ENCODE measurements at regions of chr7 and their contacts with region 1.

Region 1: DNA sequence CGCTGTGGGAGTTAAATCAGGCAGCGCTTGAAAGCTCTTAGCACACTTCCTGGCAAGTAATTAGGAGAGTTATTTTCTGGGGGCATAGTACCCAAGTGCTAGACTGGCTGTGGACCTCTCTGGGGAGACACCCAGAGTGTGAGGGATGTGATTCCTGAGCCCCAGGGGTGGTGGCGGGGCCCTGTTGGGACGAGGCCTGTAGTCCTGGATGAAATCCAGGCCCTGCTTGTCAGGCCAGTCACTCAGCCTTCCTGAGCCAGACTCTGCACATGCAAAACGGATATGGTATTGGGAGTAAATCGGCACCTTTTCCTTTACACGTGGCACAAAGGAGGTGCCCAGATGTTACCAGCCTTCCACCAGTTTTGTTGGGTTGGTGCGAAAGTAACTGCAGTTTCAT is 31.2 kb downstream of the TRRAP start:
- DNase-seq: no peak
- ATAC-seq: no peak
- H3K4me3 ChIP-seq: no peak overlapping the region
- H3K4me3 Mint-ChIP-seq: no peak overlapping the region
- H3K27ac ChIP-seq: no peak overlapping the region
- H3K27ac Mint-ChIP-seq: no peak overlapping the region
- H3K4me1 ChIP-seq: no peaks in the 10 kb centered on the region
- H3K4me1 Mint-ChIP-seq: no peaks in the 10 kb centered on the region
- H3K27me3 ChIP-seq: no peaks in the 10 kb centered on the region
- H3K27me3 Mint-ChIP-seq: no peaks in the 10 kb centered on the region
- CTCF ChIP-seq: no peak

Region 2: GRCh38 chr7:98892609-98893008 is 16.9 kb before region 1 on chr7:
- CTCF ChIA-PET with region 1: interaction called, 4 read pairs
- POLR2A ChIA-PET with region 1: no interaction called
- intact Hi-C with region 1: loop called in 1 of 2 experiments (anchors 2 kb)
- DNase-seq: no peak
- ATAC-seq: no peak
- H3K4me3 ChIP-seq: no peak overlapping the region
- H3K4me3 Mint-ChIP-seq: no peak overlapping the region
- H3K27ac ChIP-seq: no peak overlapping the region
- H3K27ac Mint-ChIP-seq: no peak overlapping the region
- H3K4me1 ChIP-seq: no peaks in the 10 kb centered on the region
- H3K4me1 Mint-ChIP-seq: peaks cover 9% of the 10 kb centered on the region
- H3K27me3 ChIP-seq: no peaks in the 10 kb centered on the region
- H3K27me3 Mint-ChIP-seq: no peaks in the 10 kb centered on the region
- CTCF ChIP-seq: no peak